WTC11 (cell line): ENCODE measurements at regions of chr2 and their contacts with region 1.

Region 1: DNA sequence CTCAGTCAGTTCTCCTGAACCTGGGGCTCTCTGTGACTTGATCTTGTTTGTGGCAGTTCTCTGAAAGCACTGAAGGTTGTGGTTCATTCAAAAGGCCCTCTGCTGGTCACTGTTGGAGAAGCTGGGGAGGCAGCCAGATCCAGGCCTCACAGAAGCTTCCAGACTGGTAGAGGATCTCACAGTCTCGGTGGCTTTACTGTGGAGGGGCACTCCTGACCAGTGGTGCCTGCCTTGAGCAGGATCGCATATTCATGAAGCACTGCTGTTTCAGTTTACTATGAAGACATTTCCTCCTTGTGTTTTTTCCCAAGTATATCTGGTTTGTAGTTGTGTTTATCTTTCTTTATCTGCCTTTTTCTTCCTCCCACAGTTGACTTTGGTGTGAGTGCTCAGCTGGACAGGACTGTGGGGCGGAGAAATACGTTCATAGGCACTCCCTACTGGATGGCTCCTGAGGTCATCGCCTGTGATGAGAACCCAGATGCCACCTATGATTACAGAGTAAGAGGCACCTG is 133.9 kb downstream of the MAP4K4 start:
- DNase-seq: peak; percentile 79
- ATAC-seq: peak; percentile 98
- H3K4me3 Mint-ChIP-seq: no peak overlapping the region
- H3K27ac Mint-ChIP-seq: peak overlapping the region; percentile 75
- H3K4me1 Mint-ChIP-seq: peaks cover 15% of the 10 kb centered on the region
- H3K27me3 Mint-ChIP-seq: no peaks in the 10 kb centered on the region
- CTCF ChIP-seq: peak; percentile 48; the same call in 1 of the 2 replicates

Region 2: DNA sequence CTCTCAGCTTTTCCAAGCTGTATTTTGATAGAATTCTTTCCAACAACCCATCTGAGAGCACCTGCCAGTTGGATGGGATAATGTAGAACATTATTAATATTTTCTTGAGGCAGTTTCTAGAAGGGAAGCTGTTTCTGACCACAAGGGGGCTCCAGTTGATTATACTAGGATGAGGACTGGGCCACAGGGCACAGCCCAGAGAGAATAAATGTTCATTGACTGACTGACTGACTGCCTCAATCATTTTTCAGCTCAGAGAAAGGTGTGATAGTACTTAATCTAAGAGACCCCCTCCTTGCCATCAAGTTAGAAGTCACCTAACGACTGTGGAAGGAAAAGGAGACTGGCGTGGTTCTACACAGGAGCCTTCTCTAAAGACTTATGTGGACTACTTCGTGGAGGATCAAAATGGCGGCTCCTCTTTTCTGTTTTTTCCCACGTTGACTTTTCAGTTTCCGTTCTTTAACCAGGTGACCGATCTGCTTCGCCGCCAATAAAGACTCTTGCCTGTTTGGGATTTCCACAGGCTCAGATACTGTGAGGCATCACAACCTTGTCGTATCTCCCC is 412.2 kb before region 1 on chr2:
- CTCF ChIA-PET with region 1: interaction called, 10 read pairs
- POLR2A ChIA-PET with region 1: no interaction called
- DNase-seq: peak; percentile 47
- ATAC-seq: peak; percentile 66
- H3K4me3 Mint-ChIP-seq: no peak overlapping the region
- H3K27ac Mint-ChIP-seq: no peak overlapping the region
- H3K4me1 Mint-ChIP-seq: no peaks in the 10 kb centered on the region
- H3K27me3 Mint-ChIP-seq: no peaks in the 10 kb centered on the region; the same call in 1 of the 2 replicates
- CTCF ChIP-seq: peak; percentile 66

Region 3: GRCh38 chr2:101770726-101771125 is 60.7 kb before region 1 on chr2:
- CTCF ChIA-PET with region 1: interaction called, 10 read pairs
- POLR2A ChIA-PET with region 1: no interaction called
- DNase-seq: no peak
- ATAC-seq: no peak; the same call in 1 of the 2 replicates
- H3K4me3 Mint-ChIP-seq: no peak overlapping the region
- H3K27ac Mint-ChIP-seq: peak overlapping the region; percentile 71; the same call in 1 of the 2 replicates
- H3K4me1 Mint-ChIP-seq: peaks cover 88% of the 10 kb centered on the region
- H3K27me3 Mint-ChIP-seq: no peaks in the 10 kb centered on the region
- CTCF ChIP-seq: no peak

Region 4: GRCh38 chr2:101776172-101777043 is 55.0 kb before region 1 on chr2:
- CTCF ChIA-PET with region 1: interaction called, 10 read pairs
- POLR2A ChIA-PET with region 1: no interaction called
- DNase-seq: peak; percentile 49
- ATAC-seq: peak; percentile 67
- H3K4me3 Mint-ChIP-seq: no peak overlapping the region
- H3K27ac Mint-ChIP-seq: no peak overlapping the region
- H3K4me1 Mint-ChIP-seq: peaks cover 90% of the 10 kb centered on the region
- H3K27me3 Mint-ChIP-seq: no peaks in the 10 kb centered on the region
- CTCF ChIP-seq: no peak

Region 5: DNA sequence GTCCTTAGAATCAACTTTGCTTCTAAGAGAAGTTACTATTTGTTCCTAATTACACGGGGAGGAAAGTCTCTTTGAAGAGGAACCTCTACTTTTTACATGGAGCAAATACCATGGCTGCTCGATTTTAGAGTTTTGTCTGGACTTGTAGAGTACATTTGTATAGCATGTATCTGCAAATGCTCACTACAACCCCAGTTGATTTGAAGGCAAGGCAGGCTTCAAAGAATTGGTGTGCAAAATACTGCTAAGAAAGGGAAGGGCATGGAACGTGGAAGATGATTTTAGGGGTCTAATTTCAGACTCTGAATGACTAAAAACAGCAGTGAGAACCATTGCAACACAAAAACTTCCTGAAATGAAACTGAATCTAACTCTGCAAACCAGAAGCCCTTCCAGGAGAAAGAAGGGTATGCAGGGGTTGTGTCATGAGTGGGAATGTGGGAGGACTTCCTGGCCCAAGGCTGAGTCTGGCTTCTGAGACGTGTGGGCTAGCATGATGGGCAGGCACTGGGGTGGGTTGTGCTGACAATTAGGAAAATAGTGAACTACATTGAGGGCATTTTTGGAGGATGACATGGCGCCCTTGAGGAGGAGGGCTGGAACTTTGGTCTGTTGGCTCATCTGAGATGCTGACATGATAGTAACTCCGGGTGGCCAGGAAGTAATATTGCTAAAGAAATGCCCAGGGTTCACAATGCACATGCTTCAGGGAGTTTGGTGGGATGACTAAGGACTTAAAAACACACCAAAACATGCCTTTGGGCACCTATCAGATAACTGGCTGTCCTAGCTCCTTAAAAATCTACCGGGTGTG is 141.4 kb after region 1 on chr2:
- CTCF ChIA-PET with region 1: no interaction called
- POLR2A ChIA-PET with region 1: no interaction called
- DNase-seq: no peak
- ATAC-seq: no peak
- H3K4me3 Mint-ChIP-seq: no peak overlapping the region
- H3K27ac Mint-ChIP-seq: no peak overlapping the region
- H3K4me1 Mint-ChIP-seq: peaks cover 42% of the 10 kb centered on the region
- H3K27me3 Mint-ChIP-seq: peaks cover 3% of the 10 kb centered on the region; the same call in 1 of the 2 replicates
- CTCF ChIP-seq: no peak